ENCODE measurements at regions of chr10 and their contacts with region 1.

Region 1: DNA sequence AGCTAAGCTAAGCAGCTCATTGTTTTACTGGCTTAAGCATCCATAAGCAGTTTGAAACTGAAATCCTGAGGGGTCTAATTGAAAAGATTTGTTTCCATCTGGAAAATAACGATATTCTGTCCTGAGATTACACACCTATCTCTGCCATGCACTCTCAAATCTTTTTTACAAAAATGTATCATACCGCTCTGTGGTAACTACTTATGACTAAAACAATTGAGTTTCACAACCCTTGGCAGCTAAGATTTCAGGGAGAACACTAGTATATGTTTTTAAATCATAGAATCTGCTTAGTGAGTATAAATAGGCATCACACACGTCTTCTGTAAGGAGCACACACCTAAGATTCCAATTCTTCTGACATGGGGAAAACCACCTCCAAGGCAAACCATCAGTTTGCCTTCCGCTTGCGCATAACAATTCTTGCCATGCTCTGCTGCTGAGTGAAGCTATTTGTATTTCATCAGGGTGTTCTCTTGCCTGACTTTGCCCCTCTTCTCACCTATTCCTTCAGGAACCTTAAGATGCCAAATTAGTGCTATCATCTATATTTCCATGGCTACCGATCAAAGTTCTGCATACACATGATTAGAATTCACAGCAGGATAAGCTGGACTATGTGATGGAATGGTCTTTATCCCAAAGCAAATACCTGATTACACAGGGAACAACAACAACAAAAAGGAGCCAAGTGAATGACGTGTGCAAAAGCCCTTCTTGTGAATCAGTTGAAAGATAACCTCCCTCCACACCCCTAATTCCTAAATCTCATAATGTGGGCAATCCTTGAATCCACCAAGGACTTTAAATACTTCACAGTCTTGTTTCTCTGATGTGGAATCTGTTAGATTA is 40.9 kb downstream of the PRPF18 start:
- H3K4me3 ChIP-seq: no peak overlapping the region
- H3K27ac ChIP-seq: no peak overlapping the region
- H3K4me1 ChIP-seq: peaks cover 9% of the 10 kb centered on the region; the same call in 1 of the 2 replicates
- CTCF ChIP-seq: no peak

Region 2: GRCh38 chr10:13613519-13613918 is 14.2 kb before region 1 on chr10:
- CTCF ChIA-PET with region 1: interaction called, 10 read pairs
- POLR2A ChIA-PET with region 1: no interaction called
- H3K4me3 ChIP-seq: no peak overlapping the region
- H3K27ac ChIP-seq: no peak overlapping the region
- H3K4me1 ChIP-seq: no peaks in the 10 kb centered on the region
- CTCF ChIP-seq: peak; percentile 42; the same call in 1 of the 2 replicates

Region 3: DNA sequence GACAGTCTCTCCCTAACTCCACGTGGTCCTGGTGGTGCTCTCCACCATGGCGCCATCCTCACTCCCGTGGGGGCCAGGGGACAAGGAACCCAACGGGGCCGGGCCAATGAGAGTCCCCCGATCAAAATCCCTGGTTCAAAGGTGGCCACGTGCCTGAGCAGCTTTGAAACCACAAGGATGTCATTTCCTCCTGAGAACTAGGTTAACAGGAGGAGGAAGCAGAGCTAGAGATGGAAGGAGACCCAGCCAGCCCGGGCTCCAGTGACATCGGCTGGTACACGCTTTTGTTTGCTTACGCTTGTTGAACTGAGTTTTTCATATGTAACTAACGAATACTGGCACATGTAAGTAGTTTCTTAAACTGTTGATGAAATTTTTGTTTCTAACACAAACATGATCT is 20.7 kb after region 1 on chr10:
- CTCF ChIA-PET with region 1: no interaction called
- POLR2A ChIA-PET with region 1: no interaction called
- H3K4me3 ChIP-seq: no peak overlapping the region
- H3K27ac ChIP-seq: no peak overlapping the region
- H3K4me1 ChIP-seq: no peaks in the 10 kb centered on the region
- CTCF ChIP-seq: no peak

Measured in HEK293 (cell line).